ENCODE measurements at regions of chr6 and their contacts with region 1.

Region 1: DNA sequence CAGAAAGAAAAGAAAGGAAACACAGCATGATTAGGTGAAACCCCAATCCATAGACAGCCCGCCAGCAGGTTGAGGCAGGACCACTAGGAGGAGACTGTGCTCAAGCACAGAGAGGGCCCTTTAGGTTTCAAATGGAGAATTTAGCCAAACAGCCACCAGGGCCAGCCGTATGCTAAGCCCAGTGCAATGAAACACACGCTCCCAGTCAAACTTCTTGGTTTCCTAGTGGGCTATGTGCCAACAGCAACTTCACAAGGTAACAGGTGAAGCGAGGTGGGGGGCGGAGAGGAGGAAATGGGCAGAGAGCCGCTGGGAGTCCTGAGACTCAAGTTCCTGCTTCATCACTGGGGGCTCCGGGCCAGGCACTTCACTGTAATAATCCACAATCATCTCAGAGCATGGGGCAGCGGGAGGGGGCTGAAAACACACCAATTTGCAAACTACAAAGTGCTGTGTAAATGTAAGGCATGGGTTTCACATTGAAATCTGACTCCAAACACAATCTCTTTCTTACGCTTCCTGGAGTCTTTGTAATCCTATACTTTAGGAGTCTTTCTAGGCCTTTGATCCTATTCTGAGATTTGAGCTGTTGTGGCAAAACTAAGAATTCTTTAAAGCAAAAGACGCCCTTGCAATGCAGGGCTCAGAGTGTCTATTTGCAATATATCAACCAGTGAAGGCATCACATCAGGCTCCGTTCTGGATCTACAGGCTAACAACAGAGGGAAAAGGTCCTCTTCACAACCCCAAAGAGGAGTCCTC is 117.3 kb downstream of the OPRM1 start:
- DNase-seq: no peak
- ATAC-seq: peak; percentile 77
- H3K4me3 Mint-ChIP-seq: peak overlapping the region; percentile 41
- H3K27ac Mint-ChIP-seq: peak overlapping the region; percentile 18
- H3K4me1 Mint-ChIP-seq: peaks cover 23% of the 10 kb centered on the region
- H3K27me3 Mint-ChIP-seq: no peaks in the 10 kb centered on the region
- CTCF ChIP-seq: no peak

Region 2: GRCh38 chr6:152828431-152828830 is 1327.9 kb before region 1 on chr6:
- CTCF ChIA-PET with region 1: no interaction called
- POLR2A ChIA-PET with region 1: no interaction called
- intact Hi-C with region 1: no loop called
- DNase-seq: no peak
- ATAC-seq: no peak
- H3K4me3 Mint-ChIP-seq: no peak overlapping the region
- H3K27ac Mint-ChIP-seq: no peak overlapping the region
- H3K4me1 Mint-ChIP-seq: no peaks in the 10 kb centered on the region
- H3K27me3 Mint-ChIP-seq: no peaks in the 10 kb centered on the region
- CTCF ChIP-seq: no peak

Region 3: DNA sequence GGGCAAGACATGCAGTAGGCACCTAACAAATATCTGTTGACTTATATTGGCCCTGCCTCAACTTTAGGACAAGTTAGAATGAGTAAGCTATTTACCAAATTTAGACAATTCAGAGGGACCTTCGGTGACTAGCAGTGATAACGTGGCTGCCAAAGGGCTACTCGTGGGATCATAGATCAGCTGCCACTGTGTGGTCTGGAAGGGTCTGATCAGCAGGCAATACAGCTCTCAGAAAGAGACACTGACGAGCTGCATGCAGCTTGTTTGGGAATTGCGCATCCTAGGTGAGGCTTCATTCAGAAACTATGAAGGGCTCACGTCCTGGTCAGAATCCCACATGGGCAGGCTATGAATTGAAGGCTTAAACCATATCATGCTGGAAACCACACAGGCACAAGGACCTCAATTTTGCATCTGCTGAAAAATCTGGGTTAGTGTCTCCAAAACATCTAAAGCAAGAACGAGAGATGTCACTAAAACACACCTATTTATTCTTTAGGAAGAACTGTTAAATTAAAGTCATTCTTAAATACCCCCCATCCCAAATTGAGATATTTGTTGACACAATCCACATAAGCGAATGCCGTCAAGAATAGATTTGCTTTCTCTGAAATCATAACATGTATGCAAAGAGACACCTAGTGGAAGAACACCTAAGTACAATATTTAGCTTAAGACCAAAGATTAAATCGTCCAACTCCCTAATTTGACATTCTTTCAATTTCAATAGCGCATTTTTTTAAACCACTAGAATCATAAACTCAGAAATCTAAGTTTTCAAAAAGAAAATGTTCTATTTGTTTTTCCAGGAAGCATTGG is 120.7 kb after region 1 on chr6:
- CTCF ChIA-PET with region 1: interaction called, 21 read pairs
- POLR2A ChIA-PET with region 1: no interaction called
- intact Hi-C with region 1: loop called (anchors 1 kb)
- DNase-seq: no peak
- ATAC-seq: peak; percentile 47
- H3K4me3 Mint-ChIP-seq: peak overlapping the region; percentile 11
- H3K27ac Mint-ChIP-seq: no peak overlapping the region
- H3K4me1 Mint-ChIP-seq: peaks cover 11% of the 10 kb centered on the region
- H3K27me3 Mint-ChIP-seq: peaks cover 2% of the 10 kb centered on the region
- CTCF ChIP-seq: no peak

Region 4: GRCh38 chr6:154370545-154370944 is 214.2 kb after region 1 on chr6:
- CTCF ChIA-PET with region 1: interaction called, 17 read pairs
- POLR2A ChIA-PET with region 1: interaction called, 3 read pairs
- intact Hi-C with region 1: loop called (anchors 1 kb)
- DNase-seq: no peak
- ATAC-seq: no peak
- H3K4me3 Mint-ChIP-seq: no peak overlapping the region
- H3K27ac Mint-ChIP-seq: no peak overlapping the region
- H3K4me1 Mint-ChIP-seq: no peaks in the 10 kb centered on the region
- H3K27me3 Mint-ChIP-seq: peaks cover 4% of the 10 kb centered on the region
- CTCF ChIP-seq: no peak

Region 5: DNA sequence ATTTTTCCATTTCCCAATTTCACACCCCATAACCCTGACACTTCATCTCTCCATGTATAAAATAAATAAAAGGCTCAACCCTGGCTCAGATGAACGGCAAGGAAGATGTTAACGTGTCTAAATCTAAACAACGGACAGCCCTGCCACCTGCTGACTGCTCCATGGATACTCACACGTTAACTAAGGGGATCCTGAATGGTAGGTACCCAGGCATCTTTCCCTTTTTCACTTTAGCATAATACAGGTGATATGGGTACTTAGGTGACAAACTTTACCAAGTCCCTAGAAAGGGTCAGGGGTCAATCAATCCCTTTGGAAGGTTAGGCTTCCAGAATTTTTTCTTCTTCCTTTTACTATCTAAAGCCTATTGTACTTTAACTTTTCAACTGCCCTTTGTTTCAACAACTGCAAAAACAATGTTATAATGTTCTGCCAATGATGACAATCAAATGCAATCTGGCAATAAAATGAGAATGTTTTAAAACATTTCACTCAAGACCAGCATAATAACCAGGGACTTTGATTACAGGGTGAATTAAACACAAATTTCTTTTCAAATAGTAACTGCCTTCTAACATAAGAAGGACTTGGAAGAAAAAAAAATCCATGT is 252.7 kb after region 1 on chr6:
- CTCF ChIA-PET with region 1: no interaction called
- POLR2A ChIA-PET with region 1: no interaction called
- intact Hi-C with region 1: loop called (anchors 1 kb)
- DNase-seq: no peak
- ATAC-seq: no peak
- H3K4me3 Mint-ChIP-seq: no peak overlapping the region
- H3K27ac Mint-ChIP-seq: no peak overlapping the region
- H3K4me1 Mint-ChIP-seq: no peaks in the 10 kb centered on the region
- H3K27me3 Mint-ChIP-seq: peaks cover 2% of the 10 kb centered on the region
- CTCF ChIP-seq: no peak

Region 6: DNA sequence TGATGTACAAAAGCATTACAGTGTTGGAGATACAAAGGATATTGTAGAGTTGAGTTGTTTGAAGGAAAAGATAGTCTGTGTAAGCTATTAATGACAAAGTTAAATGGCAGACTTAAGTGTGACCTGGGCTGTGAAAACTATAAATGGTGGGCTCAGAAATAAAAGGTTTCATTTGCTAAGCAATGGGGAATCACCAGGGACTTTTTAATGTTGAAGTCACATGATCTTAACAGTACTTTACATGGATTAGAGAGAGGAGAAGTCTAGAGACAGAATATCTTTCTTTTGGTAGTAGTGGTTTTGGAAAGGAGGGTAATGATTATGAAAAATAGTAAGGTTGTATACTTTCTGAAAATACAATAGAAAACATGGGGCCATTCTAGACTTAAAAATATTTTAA is 644.0 kb after region 1 on chr6:
- CTCF ChIA-PET with region 1: no interaction called
- POLR2A ChIA-PET with region 1: no interaction called
- intact Hi-C with region 1: loop called (anchors 5 kb)
- DNase-seq: no peak
- ATAC-seq: peak; percentile 76
- H3K4me3 Mint-ChIP-seq: peak overlapping the region; percentile 12
- H3K27ac Mint-ChIP-seq: peak overlapping the region; percentile 85
- H3K4me1 Mint-ChIP-seq: peaks cover 16% of the 10 kb centered on the region
- H3K27me3 Mint-ChIP-seq: no peaks in the 10 kb centered on the region
- CTCF ChIP-seq: no peak